Activated CD8-positive, alpha-beta T cell treated with anti-CD3 and anti-CD28 coated beads, Interleukin-2, amount 10 ng/mL, durations not matched to agents 7 days and 5 days (primary cell): ENCODE measurements at regions of chr1 and their contacts with region 1.

Region 1: GRCh38 chr1:8925406-8925805 is 20.3 kb upstream of the CA6 start:
- DNase-seq: no peak
- ATAC-seq: no peak
- H3K4me3 Mint-ChIP-seq: no peak overlapping the region
- H3K27ac Mint-ChIP-seq: no peak overlapping the region
- H3K4me1 Mint-ChIP-seq: peaks cover 39% of the 10 kb centered on the region
- H3K27me3 Mint-ChIP-seq: no peaks in the 10 kb centered on the region

Region 2: GRCh38 chr1:8396786-8397406 is 528.5 kb before region 1 on chr1:
- CTCF ChIA-PET with region 1: no interaction called
- POLR2A ChIA-PET with region 1: no interaction called
- DNase-seq: no peak
- ATAC-seq: peak; percentile 40
- H3K4me3 Mint-ChIP-seq: no peak overlapping the region
- H3K27ac Mint-ChIP-seq: peak overlapping the region; percentile 47
- H3K4me1 Mint-ChIP-seq: peaks cover 55% of the 10 kb centered on the region
- H3K27me3 Mint-ChIP-seq: no peaks in the 10 kb centered on the region

Region 3: GRCh38 chr1:8941906-8942305 is 16.5 kb after region 1 on chr1:
- CTCF ChIA-PET with region 1: interaction called, 14 read pairs
- POLR2A ChIA-PET with region 1: interaction called, 410 read pairs
- DNase-seq: no peak
- ATAC-seq: no peak
- H3K4me3 Mint-ChIP-seq: no peak overlapping the region
- H3K27ac Mint-ChIP-seq: peak overlapping the region; percentile 61
- H3K4me1 Mint-ChIP-seq: peaks cover 94% of the 10 kb centered on the region
- H3K27me3 Mint-ChIP-seq: no peaks in the 10 kb centered on the region